ENCODE measurements at regions of chr1 and their contacts with region 1.

Region 1: DNA sequence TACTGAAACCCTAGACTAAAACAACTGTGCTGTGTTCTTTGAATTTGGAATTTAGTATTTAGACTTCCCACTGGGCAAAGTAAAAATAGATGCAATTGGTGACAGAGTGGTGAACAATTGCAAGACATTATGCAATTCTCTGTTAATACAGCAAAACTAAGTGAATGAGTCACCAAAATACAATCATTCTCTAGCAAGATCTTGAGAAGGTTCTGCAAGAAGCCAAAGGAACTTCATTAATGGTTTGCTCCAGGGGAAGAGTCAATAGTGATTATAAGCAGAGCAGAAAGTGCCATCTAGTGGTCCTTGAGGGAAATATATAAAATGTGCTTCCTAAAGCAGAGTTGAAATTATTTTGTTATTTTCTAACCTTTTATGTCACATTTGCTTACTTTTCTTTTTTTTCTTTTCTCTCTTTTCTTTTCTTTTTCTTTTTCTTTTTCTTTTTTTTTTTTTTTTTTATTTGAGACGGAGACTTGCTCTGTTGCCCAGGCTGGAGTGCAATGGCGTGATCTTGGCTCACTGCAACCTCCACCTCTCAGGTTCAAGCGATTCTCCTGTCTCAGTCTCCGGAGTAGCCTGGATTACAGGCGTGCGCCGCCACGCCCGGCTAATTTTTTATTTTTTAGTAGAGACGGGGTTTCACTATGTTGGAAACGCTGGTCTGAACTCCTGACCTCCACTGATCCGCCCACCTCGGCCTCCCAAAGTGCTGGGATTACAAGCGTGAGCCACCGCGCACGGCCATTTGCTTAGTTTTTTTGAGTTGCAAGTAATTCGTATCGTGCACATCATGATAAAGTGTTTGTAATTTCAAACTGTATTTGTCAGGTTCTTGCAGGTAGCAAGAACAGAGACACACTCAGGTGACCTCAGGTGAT is 99.2 kb downstream of the CTH start:
- DNase-seq: no peak
- H3K4me3 Mint-ChIP-seq: no peak overlapping the region
- H3K27ac Mint-ChIP-seq: no peak overlapping the region
- H3K4me1 Mint-ChIP-seq: no peaks in the 10 kb centered on the region
- H3K27me3 Mint-ChIP-seq: peaks cover 4% of the 10 kb centered on the region

Region 2: DNA sequence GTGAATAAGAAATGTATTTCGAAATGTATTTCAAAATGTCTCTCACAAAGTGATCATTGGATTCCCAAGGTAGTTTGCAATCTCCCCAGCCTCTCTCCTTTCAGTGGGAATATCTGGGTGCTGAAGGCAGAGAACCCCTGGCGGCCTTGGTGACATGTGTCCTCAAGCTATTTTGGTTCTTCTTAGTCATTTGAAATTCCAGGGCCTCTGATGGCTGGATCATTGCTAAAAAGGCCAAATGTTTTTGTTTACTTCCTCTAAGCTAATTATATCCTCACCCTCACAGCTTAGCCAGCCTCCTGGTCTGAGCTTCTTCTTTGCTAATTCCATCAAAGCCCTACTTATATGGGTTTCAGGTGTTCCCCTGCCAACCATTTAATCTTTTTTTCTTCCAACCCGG is 376.1 kb before region 1 on chr1:
- intact Hi-C with region 1: loop called (anchors 1 kb)
- DNase-seq: no peak
- H3K4me3 Mint-ChIP-seq: no peak overlapping the region
- H3K27ac Mint-ChIP-seq: no peak overlapping the region
- H3K4me1 Mint-ChIP-seq: peaks cover 6% of the 10 kb centered on the region
- H3K27me3 Mint-ChIP-seq: peaks cover 22% of the 10 kb centered on the region

Region 3: GRCh38 chr1:70247768-70248167 is 262.5 kb before region 1 on chr1:
- intact Hi-C with region 1: loop called (anchors 5 kb)
- DNase-seq: no peak
- H3K4me3 Mint-ChIP-seq: no peak overlapping the region
- H3K27ac Mint-ChIP-seq: peak overlapping the region; percentile 5
- H3K4me1 Mint-ChIP-seq: peaks cover 38% of the 10 kb centered on the region
- H3K27me3 Mint-ChIP-seq: no peaks in the 10 kb centered on the region

Region 4: DNA sequence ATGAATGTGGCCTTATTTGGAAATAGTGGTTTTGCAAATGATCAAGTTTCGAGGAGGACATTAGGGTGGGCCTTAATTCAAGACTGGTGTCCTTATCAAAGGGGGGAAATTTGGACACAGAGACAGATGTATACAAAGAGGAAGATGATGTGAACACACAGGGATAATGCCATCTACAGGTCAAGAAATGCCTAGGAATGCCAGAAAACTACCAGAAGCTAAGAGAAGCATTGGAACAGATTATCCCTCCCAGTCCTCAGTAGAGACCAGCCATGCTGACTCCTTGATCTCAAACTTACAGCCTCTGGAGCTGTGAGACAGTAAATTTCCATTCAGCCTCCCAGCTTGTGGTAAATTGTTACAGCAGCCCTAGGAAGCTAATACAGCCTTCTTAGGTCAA is 386.0 kb after region 1 on chr1:
- intact Hi-C with region 1: no loop called
- DNase-seq: no peak
- H3K4me3 Mint-ChIP-seq: no peak overlapping the region
- H3K27ac Mint-ChIP-seq: no peak overlapping the region
- H3K4me1 Mint-ChIP-seq: peaks cover 16% of the 10 kb centered on the region
- H3K27me3 Mint-ChIP-seq: no peaks in the 10 kb centered on the region